A549 (cell line): ENCODE measurements at regions of chr5 and their contacts with region 1.

Region 1: GRCh38 chr5:149141224-149141956 is at the start of gene ABLIM3:
- DNase-seq: peak; percentile 74 to 88
- ATAC-seq: peak; percentile 92 to 96
- H3K4me3 ChIP-seq: peak within 1 kb of the TSS; percentile 65
- H3K27ac ChIP-seq: peak within 1 kb of the TSS; percentile 69 to 83
- H3K4me1 ChIP-seq: peaks cover 12% of the 10 kb centered on the region; the same call in 1 of the 3 replicates
- CTCF ChIP-seq: peak; percentile 92
- EP300 ChIP-seq: no peak
- POLR2A ChIP-seq: no peak
- RAD21 ChIP-seq: peak; percentile 50 to 77; a peak in 4 of 5 replicates
- polyA plus RNA-seq, gene ABLIM3: 2.7 and 3.5 TPM in 2 replicates

Region 2: GRCh38 chr5:149053072-149053695 is 88.2 kb before region 1 on chr5:
- CTCF ChIA-PET with region 1: no interaction called
- POLR2A ChIA-PET with region 1: no interaction called
- DNase-seq: no peak
- ATAC-seq: no peak
- H3K4me3 ChIP-seq: no peak overlapping the region
- H3K27ac ChIP-seq: no peak overlapping the region
- H3K4me1 ChIP-seq: no peaks in the 10 kb centered on the region
- CTCF ChIP-seq: no peak
- EP300 ChIP-seq: no peak
- POLR2A ChIP-seq: no peak
- RAD21 ChIP-seq: no peak

Region 3: GRCh38 chr5:149128023-149128875 is 13.1 kb before region 1 on chr5:
- CTCF ChIA-PET with region 1: interaction called, 52 read pairs
- POLR2A ChIA-PET with region 1: no interaction called
- DNase-seq: peak; percentile 30 to 76
- ATAC-seq: peak; percentile 88 to 97
- H3K4me3 ChIP-seq: no peak overlapping the region
- H3K27ac ChIP-seq: no peak overlapping the region
- H3K4me1 ChIP-seq: no peaks in the 10 kb centered on the region
- CTCF ChIP-seq: peak; percentile 60
- EP300 ChIP-seq: no peak
- POLR2A ChIP-seq: no peak
- RAD21 ChIP-seq: peak; percentile 31 to 57; a peak in 4 of 5 replicates

Region 4: DNA sequence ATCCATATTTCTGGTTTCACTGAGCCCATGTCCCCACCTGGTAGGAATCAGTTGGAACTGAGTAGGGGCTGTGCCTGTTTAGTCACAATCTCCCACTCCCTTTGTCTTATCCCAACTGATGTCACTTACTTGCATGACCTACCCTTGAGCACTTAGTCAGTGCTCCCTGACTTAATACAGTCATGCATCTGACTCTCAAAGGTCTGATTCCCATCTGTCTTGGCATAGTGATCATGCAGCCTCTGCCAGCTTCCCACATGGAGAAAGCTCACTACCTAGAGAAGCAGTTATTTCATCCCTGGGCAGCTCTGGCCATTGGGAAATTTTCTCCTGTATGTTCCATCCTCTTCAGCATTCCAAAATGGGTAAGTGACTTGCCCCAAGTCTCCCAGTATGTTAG is 24.7 kb after region 1 on chr5:
- CTCF ChIA-PET with region 1: interaction called, 31 read pairs
- POLR2A ChIA-PET with region 1: no interaction called
- DNase-seq: no peak
- ATAC-seq: no peak
- H3K4me3 ChIP-seq: no peak overlapping the region
- H3K27ac ChIP-seq: no peak overlapping the region
- H3K4me1 ChIP-seq: peaks cover 7% of the 10 kb centered on the region; the same call in 1 of the 3 replicates
- CTCF ChIP-seq: no peak
- EP300 ChIP-seq: no peak
- POLR2A ChIP-seq: no peak
- RAD21 ChIP-seq: no peak

Region 5: DNA sequence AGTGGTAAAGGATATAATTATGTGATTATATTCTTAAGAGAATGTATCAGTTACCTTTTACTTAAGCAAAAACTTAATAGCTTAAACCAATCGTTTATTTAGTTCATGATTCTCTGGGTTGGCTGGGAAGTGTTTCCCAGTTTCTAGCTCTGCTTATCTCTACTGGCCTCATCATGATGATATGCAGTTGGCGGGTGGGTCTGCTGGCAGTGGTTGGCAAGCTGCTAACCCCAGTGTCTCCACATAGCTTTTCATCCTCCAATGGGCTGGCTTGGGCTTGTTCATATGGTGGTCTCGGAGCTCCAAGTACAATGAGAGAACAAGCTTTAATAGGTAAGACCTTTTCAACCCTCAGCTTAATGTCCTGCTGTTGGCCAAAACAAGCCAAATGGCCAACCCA is 43.7 kb after region 1 on chr5:
- CTCF ChIA-PET with region 1: interaction called, 12 read pairs
- POLR2A ChIA-PET with region 1: no interaction called
- DNase-seq: no peak
- ATAC-seq: no peak
- H3K4me3 ChIP-seq: no peak overlapping the region
- H3K27ac ChIP-seq: no peak overlapping the region
- H3K4me1 ChIP-seq: peaks cover 11% of the 10 kb centered on the region
- CTCF ChIP-seq: no peak
- EP300 ChIP-seq: no peak
- POLR2A ChIP-seq: no peak
- RAD21 ChIP-seq: no peak

Region 6: GRCh38 chr5:149228618-149229297 is 87.4 kb after region 1 on chr5:
- CTCF ChIA-PET with region 1: interaction called, 149 read pairs
- POLR2A ChIA-PET with region 1: interaction called, 4 read pairs
- DNase-seq: peak; percentile 74 to 85
- ATAC-seq: peak; percentile 93 to 98
- H3K4me3 ChIP-seq: no peak overlapping the region
- H3K27ac ChIP-seq: peak overlapping the region; percentile 19 to 25; a peak in 2 of 6 replicates
- H3K4me1 ChIP-seq: peaks cover 16% of the 10 kb centered on the region; the same call in 1 of the 3 replicates
- CTCF ChIP-seq: peak; percentile 64
- EP300 ChIP-seq: no peak
- POLR2A ChIP-seq: no peak
- RAD21 ChIP-seq: peak; percentile 78 to 86

Region 7: GRCh38 chr5:149254506-149254905 is 113.1 kb after region 1 on chr5:
- CTCF ChIA-PET with region 1: interaction called, 13 read pairs
- POLR2A ChIA-PET with region 1: no interaction called
- DNase-seq: no peak
- ATAC-seq: 0 out of 6 replicates have a peak, but pooled peaks of 1 of the 2 experiments have one; percentile 30
- H3K4me3 ChIP-seq: no peak overlapping the region
- H3K27ac ChIP-seq: no peak overlapping the region
- H3K4me1 ChIP-seq: no peaks in the 10 kb centered on the region
- CTCF ChIP-seq: no peak
- EP300 ChIP-seq: no peak
- POLR2A ChIP-seq: no peak
- RAD21 ChIP-seq: no peak

Region 8: DNA sequence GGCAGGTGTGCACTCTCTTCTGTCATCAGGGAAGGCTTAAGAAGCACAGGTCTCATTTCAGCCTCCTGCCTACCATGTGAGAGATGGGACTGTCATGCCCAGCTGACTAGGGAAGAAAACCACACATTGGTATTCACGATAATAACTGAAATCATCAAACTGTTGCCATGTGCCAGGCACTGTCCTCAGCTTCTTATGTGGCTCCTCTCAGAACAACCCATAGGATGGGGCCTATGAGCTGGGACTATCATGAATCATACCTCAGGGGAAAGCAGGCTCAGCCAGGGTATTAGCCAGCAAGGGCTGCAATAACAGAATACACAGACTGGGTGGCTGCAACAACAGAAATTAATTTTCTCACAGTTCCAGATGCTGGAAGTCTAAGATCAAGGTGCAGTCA is 133.5 kb after region 1 on chr5:
- CTCF ChIA-PET with region 1: interaction called, 15 read pairs
- POLR2A ChIA-PET with region 1: no interaction called
- DNase-seq: no peak
- ATAC-seq: no peak
- H3K4me3 ChIP-seq: no peak overlapping the region
- H3K27ac ChIP-seq: no peak overlapping the region
- H3K4me1 ChIP-seq: peaks cover 9% of the 10 kb centered on the region; the same call in 1 of the 3 replicates
- CTCF ChIP-seq: no peak
- EP300 ChIP-seq: no peak
- POLR2A ChIP-seq: no peak
- RAD21 ChIP-seq: no peak